Gastrocnemius medialis (tissue), 4 donors: ENCODE measurements at regions of chr14 and their contacts with region 1.

Region 1: GRCh38 chr14:23320774-23321571 is at the start of gene PABPN1:
- DNase-seq: peak; percentile 99 to 100
- ATAC-seq: peak; percentile 92 to 96
- H3K4me3 ChIP-seq: peak within 1 kb of the TSS; percentile 90 to 100 (median 96)
- H3K27ac ChIP-seq: peak within 1 kb of the TSS; percentile 98 to 100 (median 99)
- H3K4me1 ChIP-seq: peaks cover 13 to 25% of the 10 kb centered on the region in 2 donors
- H3K27me3 ChIP-seq: no peaks in the 10 kb centered on the region
- CTCF ChIP-seq: no peak
- POLR2A ChIP-seq: peak; percentile 83 to 86
- total RNA-seq, gene PABPN1: 15.7 to 32.8 (median 26.6) TPM

Region 2: GRCh38 chr14:22766456-22767322 is 554.3 kb before region 1 on chr14 and contains the start of gene OXA1L:
- in situ Hi-C with region 1: no loop called
- intact Hi-C with region 1: loop called (anchors 10 kb)
- DNase-seq: peak; percentile 97 to 98
- ATAC-seq: peak; percentile 98 to 99
- H3K4me3 ChIP-seq: peak within 1 kb of the TSS; percentile 73 to 96 (median 84)
- H3K27ac ChIP-seq: peak within 1 kb of the TSS; percentile 84 to 94 (median 92)
- H3K4me1 ChIP-seq: peaks cover 16 to 19% of the 10 kb centered on the region in 2 donors
- H3K27me3 ChIP-seq: no peaks in the 10 kb centered on the region
- CTCF ChIP-seq: no peak
- POLR2A ChIP-seq: peak; percentile 52 to 65
- total RNA-seq, gene OXA1L: 83.5 to 135 (median 114) TPM

Region 3: GRCh38 chr14:23286020-23286905 is 34.7 kb before region 1 on chr14 and contains the start of gene HOMEZ:
- in situ Hi-C with region 1: no loop called
- intact Hi-C with region 1: loop called (anchors 1 kb)
- DNase-seq: peak; percentile 100
- ATAC-seq: peak; percentile 93 to 95
- H3K4me3 ChIP-seq: peak within 1 kb of the TSS; percentile 84 to 99 (median 94)
- H3K27ac ChIP-seq: peak within 1 kb of the TSS; percentile 98 to 100 (median 100)
- H3K4me1 ChIP-seq: peaks cover 20 to 25% of the 10 kb centered on the region in 2 donors
- H3K27me3 ChIP-seq: no peaks in the 10 kb centered on the region
- CTCF ChIP-seq: peak in 3 of 5 experiments; percentile 11 to 23 (median 21)
- POLR2A ChIP-seq: peak; percentile 88 to 91
- total RNA-seq, gene HOMEZ: 7.8 to 10.0 (median 8.4) TPM

Region 4: DNA sequence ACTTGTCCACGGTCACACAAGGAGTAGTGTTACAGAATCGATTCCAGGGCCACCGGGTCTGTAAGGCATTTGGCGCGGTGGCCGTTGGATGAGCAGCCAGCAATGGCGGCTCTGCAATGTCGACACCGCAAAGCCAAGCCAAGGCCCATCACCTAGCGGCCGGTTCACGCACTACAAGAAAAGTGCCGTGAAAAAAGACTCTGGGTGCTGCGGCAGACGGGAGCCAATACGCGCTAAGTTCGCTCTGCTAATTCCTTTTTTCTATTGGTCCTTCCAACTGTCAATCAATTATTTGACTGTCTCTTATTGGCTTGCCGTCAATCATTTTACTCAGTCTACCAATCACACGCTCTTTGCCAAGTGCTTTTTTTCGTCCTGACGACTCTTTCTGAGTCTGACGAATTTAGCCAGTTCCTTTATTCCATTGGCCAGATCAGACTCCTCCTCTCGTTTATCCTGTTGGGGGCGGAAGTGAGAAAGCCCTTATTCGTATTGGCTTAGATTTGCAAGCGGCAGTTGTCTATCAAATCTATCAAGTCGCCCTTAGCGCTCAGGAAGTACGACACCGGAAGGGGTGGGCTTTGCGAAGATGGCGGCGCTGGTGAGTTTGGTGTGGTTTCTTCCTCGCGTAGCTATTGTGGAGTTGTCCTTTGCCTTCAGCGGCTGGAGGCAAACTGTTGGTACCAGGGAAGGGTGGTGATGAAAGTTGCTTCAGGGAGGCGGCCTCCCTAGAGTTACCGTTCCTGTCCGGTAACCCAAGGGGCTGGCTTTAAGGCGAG is 148.3 kb after region 1 on chr14 and contains the start of gene NGDN:
- in situ Hi-C with region 1: loop called in 3 of 4 experiments (anchors 10 kb)
- intact Hi-C with region 1: loop called (anchors 1 kb)
- DNase-seq: peak; percentile 96 to 97
- ATAC-seq: peak; percentile 98 to 99
- H3K4me3 ChIP-seq: peak within 1 kb of the TSS; percentile 74 to 98 (median 88)
- H3K27ac ChIP-seq: peak within 1 kb of the TSS; percentile 82 to 89 (median 86)
- H3K4me1 ChIP-seq: peaks cover 12% of the 10 kb centered on the region in 2 donors
- H3K27me3 ChIP-seq: no peaks in the 10 kb centered on the region
- CTCF ChIP-seq: peak; percentile 88 to 97 (median 95)
- POLR2A ChIP-seq: peak; percentile 44 to 73
- total RNA-seq, gene NGDN: 27.9 to 41.9 (median 36.1) TPM

Region 5: DNA sequence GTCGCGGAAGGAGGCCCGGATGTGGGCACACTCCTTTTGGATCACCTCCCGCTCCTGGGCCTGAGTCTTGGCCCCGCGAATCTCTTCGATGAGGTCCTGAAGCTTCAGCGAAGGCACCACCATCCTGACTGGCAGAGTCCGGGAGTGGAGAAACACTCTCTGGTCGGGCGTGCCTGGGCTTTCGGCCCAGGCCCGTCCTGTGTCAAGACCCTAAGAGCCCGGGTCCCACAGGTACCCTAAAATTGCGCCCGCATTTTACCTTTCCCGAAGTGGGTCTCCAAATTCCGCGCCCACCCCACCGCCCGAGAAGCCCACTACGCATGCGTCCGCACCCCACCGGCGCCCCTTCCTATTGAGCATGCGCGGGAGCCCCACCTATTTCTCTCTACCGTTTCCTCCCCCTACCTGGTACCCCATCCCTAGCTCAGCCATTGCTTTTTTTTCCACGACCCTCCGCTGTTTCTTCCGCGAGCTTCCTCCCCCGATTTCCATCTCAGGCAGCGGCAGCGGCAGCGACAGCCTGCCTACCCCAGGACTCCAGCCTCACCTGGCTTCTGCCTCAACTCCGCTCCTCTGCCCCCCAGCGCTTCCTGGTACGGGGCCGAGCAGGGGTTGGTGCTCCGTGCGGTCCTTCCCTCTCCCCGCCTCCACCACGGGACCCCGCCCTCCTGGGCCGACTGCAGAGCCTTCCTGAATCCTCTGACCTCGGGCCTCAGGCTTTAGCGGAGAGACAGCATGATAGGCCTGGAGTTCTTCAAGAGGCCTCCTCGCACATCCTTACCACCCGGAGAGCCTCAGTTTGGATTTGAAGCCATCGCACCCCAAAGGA is 246.4 kb after region 1 on chr14 and contains the start of gene AP1G2:
- in situ Hi-C with region 1: loop called in 2 of 4 experiments (anchors 10 to 25 kb)
- intact Hi-C with region 1: no loop called
- DNase-seq: peak; percentile 54 to 55
- ATAC-seq: peak; percentile 44 to 57
- H3K4me3 ChIP-seq: peak within 1 kb of the TSS; percentile 64 to 83 (median 70)
- H3K27ac ChIP-seq: peak within 1 kb of the TSS; percentile 30 to 69 (median 62)
- H3K4me1 ChIP-seq: no peaks in the 10 kb centered on the region
- H3K27me3 ChIP-seq: no peaks in the 10 kb centered on the region
- CTCF ChIP-seq: no peak
- POLR2A ChIP-seq: no peak
- total RNA-seq, gene AP1G2: 1.5 to 31.5 (median 7.8) TPM